ENCODE measurements at regions of chr1 and their contacts with region 1.

Region 1: GRCh38 chr1:110338886-110339406 is at the start of gene RBM15:
- DNase-seq: peak; percentile 92 to 98
- H3K4me3 ChIP-seq: peak within 1 kb of the TSS; percentile 93 to 97 (median 96)
- H3K27ac ChIP-seq: peak within 1 kb of the TSS; percentile 97
- H3K4me1 ChIP-seq: peaks cover 0 to 18% (median 15%) of the 10 kb centered on the region in 4 experiments; a peak in 6 of 7 replicates
- H3K27me3 ChIP-seq: no peaks in the 10 kb centered on the region
- CTCF ChIP-seq: no peak
- EP300 ChIP-seq: no peak
- POLR2A ChIP-seq: no peak
- RAD21 ChIP-seq: no peak
- total RNA-seq, gene RBM15: 41.2 and 44.9 TPM in 2 replicates

Region 2: GRCh38 chr1:110150330-110151174 is 188.4 kb before region 1 on chr1 and contains the start of gene SLC6A17:
- CTCF ChIA-PET with region 1: no interaction called
- POLR2A ChIA-PET with region 1: no interaction called
- DNase-seq: peak in 1 of 2 experiments; percentile 81
- H3K4me3 ChIP-seq: peak within 1 kb of the TSS; percentile 30 to 65 (median 44)
- H3K27ac ChIP-seq: no peak within 1 kb of the TSS
- H3K4me1 ChIP-seq: peaks cover 0 to 5% (median 2%) of the 10 kb centered on the region in 4 experiments; a peak in 3 of 7 replicates
- H3K27me3 ChIP-seq: peaks cover 37 to 86% (median 68%) of the 10 kb centered on the region in 4 experiments
- CTCF ChIP-seq: peak in 1 of 3 experiments; percentile 21; a peak in 1 of 4 replicates
- EP300 ChIP-seq: no peak
- POLR2A ChIP-seq: no peak
- RAD21 ChIP-seq: no peak
- total RNA-seq, gene SLC6A17: 0.28 and 0.29 TPM in 2 replicates

Region 3: GRCh38 chr1:110196917-110197765 is 141.8 kb before region 1 on chr1:
- CTCF ChIA-PET with region 1: interaction called, 146 read pairs
- POLR2A ChIA-PET with region 1: no interaction called
- DNase-seq: peak in 1 of 2 experiments; percentile 63
- H3K4me3 ChIP-seq: no peak overlapping the region
- H3K27ac ChIP-seq: no peak overlapping the region
- H3K4me1 ChIP-seq: peaks cover 0 to 6% (median 2%) of the 10 kb centered on the region in 4 experiments; a peak in 2 of 7 replicates
- H3K27me3 ChIP-seq: no peaks in the 10 kb centered on the region
- CTCF ChIP-seq: peak; percentile 73 to 95 (median 81)
- EP300 ChIP-seq: no peak
- POLR2A ChIP-seq: no peak
- RAD21 ChIP-seq: peak; percentile 70 to 82

Region 4: GRCh38 chr1:110319332-110320152 is 19.4 kb before region 1 on chr1:
- CTCF ChIA-PET with region 1: interaction called, 4 read pairs
- POLR2A ChIA-PET with region 1: interaction called, 14 read pairs
- DNase-seq: no peak
- H3K4me3 ChIP-seq: no peak overlapping the region
- H3K27ac ChIP-seq: no peak overlapping the region
- H3K4me1 ChIP-seq: no peaks in the 10 kb centered on the region
- H3K27me3 ChIP-seq: no peaks in the 10 kb centered on the region
- CTCF ChIP-seq: no peak
- EP300 ChIP-seq: no peak
- POLR2A ChIP-seq: no peak
- RAD21 ChIP-seq: no peak

Region 5: GRCh38 chr1:110328274-110328673 is 10.7 kb before region 1 on chr1:
- CTCF ChIA-PET with region 1: interaction called, 10 read pairs
- POLR2A ChIA-PET with region 1: interaction called, 9 read pairs
- DNase-seq: no peak
- H3K4me3 ChIP-seq: no peak overlapping the region
- H3K27ac ChIP-seq: no peak overlapping the region
- H3K4me1 ChIP-seq: no peaks in the 10 kb centered on the region
- H3K27me3 ChIP-seq: no peaks in the 10 kb centered on the region; a peak in 1 of 7 replicates
- CTCF ChIP-seq: no peak
- EP300 ChIP-seq: no peak
- POLR2A ChIP-seq: no peak
- RAD21 ChIP-seq: no peak

Region 6: GRCh38 chr1:110356405-110356804 is 17.5 kb after region 1 on chr1:
- CTCF ChIA-PET with region 1: interaction called, 3 read pairs
- POLR2A ChIA-PET with region 1: interaction called, 25 read pairs
- DNase-seq: no peak
- H3K4me3 ChIP-seq: no peak overlapping the region
- H3K27ac ChIP-seq: no peak overlapping the region
- H3K4me1 ChIP-seq: no peaks in the 10 kb centered on the region
- H3K27me3 ChIP-seq: no peaks in the 10 kb centered on the region
- CTCF ChIP-seq: no peak
- EP300 ChIP-seq: no peak
- POLR2A ChIP-seq: no peak
- RAD21 ChIP-seq: no peak

Region 7: DNA sequence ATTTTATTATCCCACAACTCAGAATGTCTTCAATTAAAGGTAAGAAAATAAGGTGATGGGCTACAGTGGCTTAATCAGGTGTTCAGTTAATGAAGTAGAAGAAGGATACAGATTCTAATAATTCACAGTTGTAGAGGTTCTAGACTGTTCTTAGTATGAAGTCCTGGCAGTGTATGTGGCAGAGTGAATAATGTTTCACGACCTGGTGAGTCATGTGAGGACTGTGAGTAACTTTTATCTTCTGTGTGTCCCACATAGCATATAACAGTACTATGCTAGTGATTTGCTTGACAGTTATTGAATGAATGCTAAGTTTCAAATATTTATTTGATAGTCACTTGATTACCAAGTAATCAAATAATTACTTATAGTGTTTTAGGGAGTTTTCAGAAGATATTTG is 31.9 kb after region 1 on chr1:
- CTCF ChIA-PET with region 1: no interaction called
- POLR2A ChIA-PET with region 1: interaction called, 11 read pairs
- DNase-seq: no peak
- H3K4me3 ChIP-seq: no peak overlapping the region
- H3K27ac ChIP-seq: no peak overlapping the region
- H3K4me1 ChIP-seq: no peaks in the 10 kb centered on the region
- H3K27me3 ChIP-seq: no peaks in the 10 kb centered on the region
- CTCF ChIP-seq: no peak
- EP300 ChIP-seq: no peak
- POLR2A ChIP-seq: no peak
- RAD21 ChIP-seq: no peak

Region 8: GRCh38 chr1:110407260-110408210 is 68.6 kb after region 1 on chr1 and contains the start of gene LAMTOR5:
- CTCF ChIA-PET with region 1: interaction called, 3 read pairs
- POLR2A ChIA-PET with region 1: interaction called, 10 read pairs
- DNase-seq: peak; percentile 67 to 91
- H3K4me3 ChIP-seq: peak within 1 kb of the TSS; percentile 78 to 90 (median 83)
- H3K27ac ChIP-seq: peak within 1 kb of the TSS; percentile 76
- H3K4me1 ChIP-seq: no peaks in the 10 kb centered on the region; a peak in 2 of 7 replicates
- H3K27me3 ChIP-seq: 0 out of 7 replicates have a peak, but pooled peaks cover 0 to 3% (median 0%) of the 10 kb centered on the region in 4 experiments
- CTCF ChIP-seq: no peak
- EP300 ChIP-seq: no peak
- POLR2A ChIP-seq: peak; percentile 68 to 91
- RAD21 ChIP-seq: 0 out of 4 replicates have a peak, but pooled peaks of 1 of the 2 experiments have one; percentile 0
- total RNA-seq, gene LAMTOR5: 84.4 and 91.9 TPM in 2 replicates